Activated CD8-positive, alpha-beta memory T cell treated with anti-CD3 and anti-CD28 coated beads, Interleukin-2, amount 10 ng/mL, durations not matched to agents 7 days and 5 days (primary cell): ENCODE measurements at regions of chr10 and their contacts with region 1.

Region 1: GRCh38 chr10:14878266-14879054 is at the start of gene SUV39H2:
- DNase-seq: peak; percentile 96
- ATAC-seq: peak; percentile 93
- H3K4me3 Mint-ChIP-seq: peak within 1 kb of the TSS; percentile 95
- H3K27ac Mint-ChIP-seq: peak within 1 kb of the TSS; percentile 91
- H3K4me1 Mint-ChIP-seq: peaks cover 46% of the 10 kb centered on the region
- H3K27me3 Mint-ChIP-seq: no peaks in the 10 kb centered on the region
- total RNA-seq, gene SUV39H2: 33.4 to 40.3 TPM

Region 2: GRCh38 chr10:14889318-14889717 is 10.9 kb after region 1 on chr10:
- CTCF ChIA-PET with region 1: interaction called, 14 read pairs
- DNase-seq: no peak
- ATAC-seq: no peak
- H3K4me3 Mint-ChIP-seq: no peak overlapping the region
- H3K27ac Mint-ChIP-seq: no peak overlapping the region
- H3K4me1 Mint-ChIP-seq: peaks cover 8% of the 10 kb centered on the region
- H3K27me3 Mint-ChIP-seq: no peaks in the 10 kb centered on the region